ENCODE measurements at regions of chr4 and their contacts with region 1.

Region 1: DNA sequence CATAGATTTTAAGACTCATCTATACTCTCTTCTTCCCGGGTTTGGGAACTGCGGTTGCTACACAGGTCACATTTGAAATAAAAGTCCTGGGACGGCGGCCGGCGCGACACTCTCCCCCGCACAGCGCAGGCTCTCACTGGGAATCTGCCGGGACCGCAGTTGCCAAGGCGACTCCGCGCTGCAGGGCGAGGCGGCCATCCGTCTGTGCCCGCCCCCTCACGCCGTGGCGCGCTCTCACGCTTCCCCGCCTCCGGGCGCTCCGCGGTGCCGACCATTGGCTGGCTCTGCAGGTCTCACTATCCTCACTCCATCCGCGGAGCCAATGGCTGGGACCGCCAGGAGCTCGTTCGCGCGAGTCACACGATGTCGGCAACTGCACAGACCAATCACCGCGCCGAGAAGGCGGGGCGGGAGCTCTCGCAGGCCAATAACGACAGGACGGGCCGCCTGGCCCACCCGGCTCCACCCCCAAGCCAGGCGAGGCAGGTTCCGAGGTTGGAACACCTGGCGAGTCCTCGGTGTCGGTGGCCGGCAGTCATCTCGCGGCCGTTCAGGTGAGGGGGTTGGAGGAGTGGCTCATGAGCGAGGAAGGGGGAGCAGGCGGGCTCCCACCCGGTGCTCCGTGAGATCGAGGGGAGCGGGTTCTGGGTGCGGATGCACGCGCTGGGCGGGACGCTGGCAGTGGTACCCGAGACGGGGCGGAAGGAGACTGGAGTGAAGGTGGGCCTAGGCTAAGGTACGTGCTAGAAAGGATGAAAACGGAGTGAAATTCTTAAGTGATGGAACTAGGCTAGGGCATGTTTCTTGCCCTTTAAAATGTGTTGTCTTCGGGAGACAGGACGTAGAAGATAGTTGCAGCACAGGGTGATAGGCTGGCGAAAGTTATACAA is at the start of gene MSMO1:
- DNase-seq: peak; percentile 100
- H3K4me3 ChIP-seq: peak within 1 kb of the TSS; percentile 81 to 98 (median 88)
- H3K27ac ChIP-seq: peak within 1 kb of the TSS; percentile 71 to 92 (median 87)
- H3K4me1 ChIP-seq: peaks cover 10 to 63% (median 43%) of the 10 kb centered on the region in 6 donors
- H3K27me3 ChIP-seq: no peaks in the 10 kb centered on the region
- CTCF ChIP-seq: peak in 2 of 11 experiments; percentile 22 to 28
- POLR2A ChIP-seq: peak in 2 of 3 donors; percentile 32 to 89
- total RNA-seq, gene MSMO1: 14.1 to 27.4 (median 18.7) TPM

Region 2: GRCh38 chr4:165053645-165054044 is 273.8 kb before region 1 on chr4 and contains the start of gene TRIM75:
- intact Hi-C with region 1: no loop called
- DNase-seq: no peak
- H3K4me3 ChIP-seq: no peak within 1 kb of the TSS
- H3K27ac ChIP-seq: no peak within 1 kb of the TSS
- H3K4me1 ChIP-seq: no peaks in the 10 kb centered on the region
- H3K27me3 ChIP-seq: no peaks in the 10 kb centered on the region
- CTCF ChIP-seq: no peak
- POLR2A ChIP-seq: no peak
- total RNA-seq, gene TRIM75: not detected

Region 3: GRCh38 chr4:165207431-165208220 is 119.8 kb before region 1 on chr4 and contains the start of gene KLHL2:
- intact Hi-C with region 1: loop called (anchors 5 kb)
- DNase-seq: peak; percentile 97
- H3K4me3 ChIP-seq: peak within 1 kb of the TSS; percentile 59 to 92 (median 82)
- H3K27ac ChIP-seq: peak within 1 kb of the TSS; percentile 71 to 99 (median 92)
- H3K4me1 ChIP-seq: peaks cover 6 to 80% (median 49%) of the 10 kb centered on the region in 6 donors
- H3K27me3 ChIP-seq: no peaks in the 10 kb centered on the region
- CTCF ChIP-seq: no peak
- POLR2A ChIP-seq: peak in 2 of 3 donors; percentile 12 to 58
- total RNA-seq, gene KLHL2: 29.7 to 102 (median 55.3) TPM

Region 4: GRCh38 chr4:165569031-165569430 is 241.6 kb after region 1 on chr4:
- intact Hi-C with region 1: no loop called
- DNase-seq: no peak
- H3K4me3 ChIP-seq: no peak overlapping the region
- H3K27ac ChIP-seq: no peak overlapping the region
- H3K4me1 ChIP-seq: no peaks in the 10 kb centered on the region
- H3K27me3 ChIP-seq: no peaks in the 10 kb centered on the region
- CTCF ChIP-seq: no peak
- POLR2A ChIP-seq: no peak

Measured in spleen (tissue), 13 donors.